B cell (primary cell): ENCODE measurements at regions of chr11 and their contacts with region 1.

Region 1: GRCh38 chr11:108222686-108223448 is at the start of gene ATM:
- DNase-seq: peak; percentile 100
- ATAC-seq: peak; percentile 81
- H3K4me3 ChIP-seq: peak within 1 kb of the TSS; percentile 97 to 99 (median 98)
- H3K4me3 Mint-ChIP-seq: no peak within 1 kb of the TSS
- H3K27ac ChIP-seq: peak within 1 kb of the TSS; percentile 98 to 99
- H3K27ac Mint-ChIP-seq: no peak within 1 kb of the TSS
- H3K4me1 ChIP-seq: peaks cover 58% of the 10 kb centered on the region in 2 donors
- H3K4me1 Mint-ChIP-seq: peaks cover 62% of the 10 kb centered on the region
- H3K27me3 ChIP-seq: no peaks in the 10 kb centered on the region
- H3K27me3 Mint-ChIP-seq: no peaks in the 10 kb centered on the region
- CTCF ChIP-seq: peak; percentile 77
- total RNA-seq, gene ATM: 446 and 471 TPM in 2 replicates

Region 2: GRCh38 chr11:107858217-107859070 is 364.4 kb before region 1 on chr11 and contains the start of gene SLC35F2:
- CTCF ChIA-PET with region 1: no interaction called
- POLR2A ChIA-PET with region 1: no interaction called
- intact Hi-C with region 1: loop called (anchors 2 kb)
- DNase-seq: peak; percentile 88
- ATAC-seq: peak; percentile 93
- H3K4me3 ChIP-seq: peak within 1 kb of the TSS; percentile 63 to 83 (median 78)
- H3K4me3 Mint-ChIP-seq: peak within 1 kb of the TSS; percentile 99
- H3K27ac ChIP-seq: peak within 1 kb of the TSS; percentile 61 to 77
- H3K27ac Mint-ChIP-seq: peak within 1 kb of the TSS; percentile 94
- H3K4me1 ChIP-seq: peaks cover 14 to 26% of the 10 kb centered on the region in 2 donors
- H3K4me1 Mint-ChIP-seq: peaks cover 29% of the 10 kb centered on the region
- H3K27me3 ChIP-seq: no peaks in the 10 kb centered on the region
- H3K27me3 Mint-ChIP-seq: no peaks in the 10 kb centered on the region
- CTCF ChIP-seq: peak; percentile 34
- total RNA-seq, gene SLC35F2: 9.4 and 10.9 TPM in 2 replicates

Region 3: DNA sequence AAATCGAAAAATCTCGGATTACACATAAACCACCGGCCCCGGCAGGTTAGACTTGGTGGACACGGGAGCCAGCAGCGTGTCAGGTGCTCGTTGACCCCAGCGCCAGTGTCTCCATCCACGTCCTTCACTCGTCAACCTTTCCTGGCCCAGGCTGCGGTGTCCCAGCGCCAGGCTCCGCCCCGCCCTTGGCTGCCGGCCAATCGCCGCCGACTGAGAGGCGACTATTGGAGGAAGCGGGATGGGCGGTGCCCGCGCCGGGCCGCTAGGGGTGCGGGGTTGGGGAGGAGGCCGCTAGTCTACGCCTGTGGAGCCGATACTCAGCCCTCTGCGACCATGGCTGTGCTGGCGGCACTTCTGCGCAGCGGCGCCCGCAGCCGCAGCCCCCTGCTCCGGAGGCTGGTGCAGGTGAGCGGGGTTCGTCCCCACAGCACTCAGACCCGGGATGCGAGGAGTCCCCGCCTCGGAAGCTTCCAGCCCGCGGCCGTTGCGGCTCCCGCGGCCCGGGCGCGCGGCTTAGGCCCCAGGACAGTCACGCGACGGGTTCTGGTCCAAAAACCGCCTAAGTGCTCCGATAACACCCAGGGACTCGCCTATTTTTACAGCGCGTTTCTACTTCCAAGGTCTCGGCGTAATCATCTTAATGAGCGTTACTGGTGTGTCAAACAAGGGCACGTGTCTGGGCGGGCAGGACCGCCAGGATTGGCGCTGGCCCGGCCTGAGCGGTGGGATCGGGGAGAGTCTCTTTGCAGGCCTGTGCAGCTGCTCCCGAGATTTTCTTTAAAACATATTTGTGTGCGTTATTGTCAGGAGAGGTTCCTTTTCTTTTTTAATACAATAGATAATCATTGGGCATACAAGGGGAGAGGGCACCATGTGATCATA is 101.4 kb before region 1 on chr11 and contains the start of gene ACAT1:
- CTCF ChIA-PET with region 1: interaction called, 3 read pairs
- POLR2A ChIA-PET with region 1: no interaction called
- intact Hi-C with region 1: loop called (anchors 1 kb)
- DNase-seq: peak; percentile 92
- ATAC-seq: peak; percentile 100
- H3K4me3 ChIP-seq: peak within 1 kb of the TSS; percentile 60 to 93 (median 86)
- H3K4me3 Mint-ChIP-seq: peak within 1 kb of the TSS; percentile 92
- H3K27ac ChIP-seq: peak within 1 kb of the TSS; percentile 46 to 53
- H3K27ac Mint-ChIP-seq: peak within 1 kb of the TSS; percentile 78
- H3K4me1 ChIP-seq: peaks cover 17 to 26% of the 10 kb centered on the region in 2 donors
- H3K4me1 Mint-ChIP-seq: peaks cover 34% of the 10 kb centered on the region
- H3K27me3 ChIP-seq: no peaks in the 10 kb centered on the region
- H3K27me3 Mint-ChIP-seq: no peaks in the 10 kb centered on the region
- CTCF ChIP-seq: peak; percentile 36
- total RNA-seq, gene ACAT1: 31.1 and 32.9 TPM in 2 replicates

Region 4: DNA sequence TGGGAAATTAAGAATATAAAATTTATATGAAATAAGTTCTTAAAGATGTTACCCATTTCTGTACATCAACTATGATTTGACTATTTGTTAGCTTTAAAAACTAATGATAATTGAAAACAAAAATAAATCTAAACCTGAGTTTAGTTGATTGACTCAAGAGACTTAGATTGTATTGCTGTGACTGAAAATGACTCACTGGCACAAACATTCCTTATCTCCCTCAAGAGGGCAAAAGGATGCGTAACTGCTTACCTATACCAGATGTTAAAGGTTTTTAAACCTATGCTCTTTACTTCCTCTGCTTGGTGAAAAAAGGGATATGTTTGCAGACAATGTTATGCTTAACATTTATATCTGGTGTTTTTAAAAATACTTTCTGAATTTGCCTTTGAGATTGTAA is 30.3 kb after region 1 on chr11:
- CTCF ChIA-PET with region 1: interaction called, 3 read pairs
- POLR2A ChIA-PET with region 1: interaction called, 3 read pairs
- intact Hi-C with region 1: loop called (anchors 5 kb)
- DNase-seq: no peak
- ATAC-seq: no peak
- H3K4me3 ChIP-seq: no peak overlapping the region
- H3K4me3 Mint-ChIP-seq: no peak overlapping the region
- H3K27ac ChIP-seq: no peak overlapping the region
- H3K27ac Mint-ChIP-seq: no peak overlapping the region
- H3K4me1 ChIP-seq: no peaks in the 10 kb centered on the region
- H3K4me1 Mint-ChIP-seq: no peaks in the 10 kb centered on the region
- H3K27me3 ChIP-seq: no peaks in the 10 kb centered on the region
- H3K27me3 Mint-ChIP-seq: no peaks in the 10 kb centered on the region
- CTCF ChIP-seq: no peak

Region 5: GRCh38 chr11:108467091-108467823 is 244.4 kb after region 1 on chr11 and contains the start of gene C11orf65:
- CTCF ChIA-PET with region 1: no interaction called
- POLR2A ChIA-PET with region 1: no interaction called
- intact Hi-C with region 1: loop called (anchors 1 kb)
- DNase-seq: peak; percentile 98
- ATAC-seq: peak; percentile 96
- H3K4me3 ChIP-seq: peak within 1 kb of the TSS; percentile 79 to 96 (median 87)
- H3K4me3 Mint-ChIP-seq: peak within 1 kb of the TSS; percentile 98
- H3K27ac ChIP-seq: peak within 1 kb of the TSS; percentile 97 to 98
- H3K27ac Mint-ChIP-seq: peak within 1 kb of the TSS; percentile 99
- H3K4me1 ChIP-seq: peaks cover 0 to 11% of the 10 kb centered on the region in 2 donors
- H3K4me1 Mint-ChIP-seq: peaks cover 16% of the 10 kb centered on the region
- H3K27me3 ChIP-seq: no peaks in the 10 kb centered on the region
- H3K27me3 Mint-ChIP-seq: no peaks in the 10 kb centered on the region
- CTCF ChIP-seq: no peak
- total RNA-seq, gene C11orf65: 1.4 and 1.7 TPM in 2 replicates